PC-9 (cell line): ENCODE measurements at regions of chr19 and their contacts with region 1.

Region 1: GRCh38 chr19:41872775-41873647 is 4.1 kb upstream of the CD79A start:
- DNase-seq: peak; percentile 79 to 84
- H3K4me3 ChIP-seq: no peak overlapping the region
- H3K27ac ChIP-seq: no peak overlapping the region
- H3K4me1 ChIP-seq: peaks cover 8% of the 10 kb centered on the region
- H3K27me3 ChIP-seq: no peaks in the 10 kb centered on the region
- CTCF ChIP-seq: peak; percentile 82

Region 2: DNA sequence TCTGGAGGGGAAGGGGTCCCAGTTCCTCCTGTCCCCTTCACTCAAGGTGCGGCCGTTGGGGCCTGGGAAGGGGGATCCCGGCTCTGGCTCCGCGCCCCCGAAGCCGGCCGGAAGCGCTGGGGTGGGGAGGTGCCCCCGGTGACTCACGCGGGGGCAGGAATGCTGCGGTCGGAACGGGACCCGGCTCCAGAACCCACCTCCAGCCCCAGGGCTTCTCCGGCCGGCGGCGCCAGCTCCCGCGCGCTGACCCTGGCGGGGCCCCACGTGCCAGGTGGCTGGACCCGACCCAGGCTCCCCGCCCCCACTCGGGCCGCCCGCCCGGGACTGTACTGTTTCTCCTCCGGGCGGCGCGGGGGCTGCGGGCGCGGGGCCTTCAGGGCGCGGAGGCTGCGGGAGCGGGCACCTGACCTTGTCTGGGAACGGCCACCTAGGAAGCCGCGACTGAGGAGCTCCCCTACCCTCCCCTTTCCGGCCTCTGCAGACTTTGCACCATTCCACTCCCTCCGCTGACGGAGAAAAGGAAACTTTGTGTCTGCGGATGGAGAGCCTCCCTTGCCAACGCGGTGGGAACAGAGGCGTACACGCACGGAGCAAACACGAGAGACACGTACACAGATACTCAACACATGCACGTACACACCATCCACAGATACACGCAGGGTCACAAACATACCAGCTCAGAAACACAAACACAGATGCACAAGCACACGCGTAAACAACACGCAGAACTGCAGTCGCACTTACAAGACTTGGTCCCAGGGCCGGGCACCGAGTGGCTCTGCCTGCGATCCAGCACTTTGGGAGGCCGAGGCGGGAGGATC is 646.7 kb before region 1 on chr19:
- CTCF ChIA-PET with region 1: no interaction called
- POLR2A ChIA-PET with region 1: no interaction called
- intact Hi-C with region 1: no loop called
- DNase-seq: peak; percentile 75 to 97
- H3K4me3 ChIP-seq: peak overlapping the region; percentile 61
- H3K27ac ChIP-seq: peak overlapping the region; percentile 78
- H3K4me1 ChIP-seq: peaks cover 52% of the 10 kb centered on the region
- H3K27me3 ChIP-seq: no peaks in the 10 kb centered on the region
- CTCF ChIP-seq: no peak

Region 3: DNA sequence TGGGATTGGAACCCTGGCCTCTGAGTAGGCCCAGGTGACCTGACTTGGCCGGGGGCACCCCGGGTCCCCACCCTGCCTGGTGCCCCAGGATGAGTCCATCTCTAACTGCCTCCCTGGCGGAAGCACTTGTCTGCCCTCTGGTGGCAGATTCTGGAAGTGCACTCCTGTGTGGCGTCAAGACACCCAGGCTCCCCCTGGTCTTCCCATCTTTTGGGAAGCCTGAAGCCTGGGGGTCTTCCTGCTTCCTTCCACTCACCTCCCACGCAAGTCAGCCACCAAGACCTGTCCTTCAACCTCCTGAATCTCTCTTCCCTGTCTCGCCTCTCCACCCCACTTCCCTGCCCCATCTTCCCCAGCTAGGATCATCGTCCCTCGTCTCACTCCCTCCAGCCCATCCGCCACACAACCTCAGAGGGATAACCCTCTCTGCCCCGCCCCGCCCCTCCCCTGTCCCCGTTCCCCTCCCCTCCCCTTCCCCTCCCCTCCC is 78.7 kb after region 1 on chr19:
- CTCF ChIA-PET with region 1: interaction called, 3 read pairs
- POLR2A ChIA-PET with region 1: no interaction called
- intact Hi-C with region 1: loop called (anchors 1 kb)
- DNase-seq: peak in 1 of 2 experiments; percentile 76
- H3K4me3 ChIP-seq: no peak overlapping the region
- H3K27ac ChIP-seq: no peak overlapping the region
- H3K4me1 ChIP-seq: no peaks in the 10 kb centered on the region
- H3K27me3 ChIP-seq: no peaks in the 10 kb centered on the region
- CTCF ChIP-seq: peak; percentile 97